Ascending aorta (tissue), 2 donors: ENCODE measurements at regions of chr2 and their contacts with region 1.

Region 1: DNA sequence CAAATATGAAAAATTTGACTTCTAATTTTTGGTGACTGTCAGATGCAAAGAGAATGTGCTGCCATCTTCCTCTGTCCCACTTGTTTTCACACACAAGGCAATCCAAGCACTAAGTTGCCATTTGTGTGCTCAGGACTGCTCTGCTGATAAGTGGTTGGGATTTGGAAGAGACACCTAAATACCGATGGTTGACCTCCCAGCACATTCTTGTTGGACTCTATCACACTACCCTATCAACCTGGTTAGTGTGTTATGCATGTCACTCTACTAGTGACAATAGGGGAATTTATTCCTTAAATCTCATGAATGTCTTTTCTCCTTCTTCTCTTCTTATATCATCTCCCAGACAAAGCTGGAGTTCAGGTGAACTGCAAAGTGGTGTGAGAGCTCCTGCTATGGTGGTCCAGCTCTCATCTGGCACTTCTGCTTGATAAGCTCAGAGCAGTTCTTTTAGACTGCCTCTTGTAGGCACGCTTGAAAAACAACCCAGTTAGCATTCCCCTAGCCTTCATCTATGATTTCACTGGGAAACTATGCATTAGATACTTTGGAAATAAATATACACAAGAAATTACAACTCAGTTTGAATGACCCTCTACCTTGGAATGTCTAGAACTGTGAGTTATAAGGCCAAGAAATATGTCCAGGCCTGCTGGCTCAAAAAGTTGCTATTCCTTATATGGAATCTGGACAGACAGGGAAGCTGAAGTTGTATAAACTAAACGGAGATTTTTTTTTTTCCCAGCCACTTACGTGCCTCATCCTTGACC is 404.8 kb downstream of the MEIS1 start:
- DNase-seq: peak in 1 of 2 donors; percentile 67
- H3K4me3 ChIP-seq: peak overlapping the region; percentile 14 to 30
- H3K27ac ChIP-seq: peak overlapping the region; percentile 58 to 80
- H3K4me1 ChIP-seq: peaks cover 0 to 6% of the 10 kb centered on the region in 2 donors
- H3K27me3 ChIP-seq: no peaks in the 10 kb centered on the region
- CTCF ChIP-seq: no peak

Region 2: GRCh38 chr2:66803726-66804125 is 36.0 kb before region 1 on chr2:
- intact Hi-C with region 1: no loop called
- DNase-seq: no peak
- H3K4me3 ChIP-seq: no peak overlapping the region
- H3K27ac ChIP-seq: no peak overlapping the region
- H3K4me1 ChIP-seq: no peaks in the 10 kb centered on the region
- H3K27me3 ChIP-seq: no peaks in the 10 kb centered on the region
- CTCF ChIP-seq: no peak

Region 3: DNA sequence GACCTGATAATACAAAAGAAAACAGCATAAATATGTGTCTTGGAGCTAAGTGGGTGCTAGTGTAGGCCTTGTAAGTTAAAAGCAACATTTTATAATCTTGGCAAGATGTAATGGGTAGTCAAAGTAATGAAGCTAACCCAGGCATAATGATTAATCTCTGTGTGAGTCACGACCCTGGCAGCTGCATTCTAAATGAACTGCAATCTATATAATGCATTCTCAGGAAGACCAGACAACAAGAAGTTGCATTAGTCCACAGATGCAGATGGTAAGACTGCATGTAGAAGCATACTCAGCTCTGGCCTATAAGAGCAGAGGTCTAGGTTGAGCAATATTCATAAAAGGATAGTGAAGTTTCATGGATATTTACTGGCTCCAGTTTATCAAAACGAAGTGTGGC is 471.8 kb after region 1 on chr2:
- intact Hi-C with region 1: loop called (anchors 10 kb)
- DNase-seq: no peak
- H3K4me3 ChIP-seq: no peak overlapping the region
- H3K27ac ChIP-seq: no peak overlapping the region
- H3K4me1 ChIP-seq: peaks cover 0 to 5% of the 10 kb centered on the region in 2 donors
- H3K27me3 ChIP-seq: no peaks in the 10 kb centered on the region
- CTCF ChIP-seq: no peak

Region 4: GRCh38 chr2:67666386-67667053 is 826.8 kb after region 1 on chr2:
- intact Hi-C with region 1: loop called (anchors 10 kb)
- DNase-seq: peak in 1 of 2 donors; percentile 76
- H3K4me3 ChIP-seq: no peak overlapping the region
- H3K27ac ChIP-seq: peak overlapping the region; percentile 73 to 78
- H3K4me1 ChIP-seq: peaks cover 0 to 23% of the 10 kb centered on the region in 2 donors
- H3K27me3 ChIP-seq: no peaks in the 10 kb centered on the region
- CTCF ChIP-seq: no peak